ENCODE measurements at regions of chr9 and their contacts with region 1.

Region 1: DNA sequence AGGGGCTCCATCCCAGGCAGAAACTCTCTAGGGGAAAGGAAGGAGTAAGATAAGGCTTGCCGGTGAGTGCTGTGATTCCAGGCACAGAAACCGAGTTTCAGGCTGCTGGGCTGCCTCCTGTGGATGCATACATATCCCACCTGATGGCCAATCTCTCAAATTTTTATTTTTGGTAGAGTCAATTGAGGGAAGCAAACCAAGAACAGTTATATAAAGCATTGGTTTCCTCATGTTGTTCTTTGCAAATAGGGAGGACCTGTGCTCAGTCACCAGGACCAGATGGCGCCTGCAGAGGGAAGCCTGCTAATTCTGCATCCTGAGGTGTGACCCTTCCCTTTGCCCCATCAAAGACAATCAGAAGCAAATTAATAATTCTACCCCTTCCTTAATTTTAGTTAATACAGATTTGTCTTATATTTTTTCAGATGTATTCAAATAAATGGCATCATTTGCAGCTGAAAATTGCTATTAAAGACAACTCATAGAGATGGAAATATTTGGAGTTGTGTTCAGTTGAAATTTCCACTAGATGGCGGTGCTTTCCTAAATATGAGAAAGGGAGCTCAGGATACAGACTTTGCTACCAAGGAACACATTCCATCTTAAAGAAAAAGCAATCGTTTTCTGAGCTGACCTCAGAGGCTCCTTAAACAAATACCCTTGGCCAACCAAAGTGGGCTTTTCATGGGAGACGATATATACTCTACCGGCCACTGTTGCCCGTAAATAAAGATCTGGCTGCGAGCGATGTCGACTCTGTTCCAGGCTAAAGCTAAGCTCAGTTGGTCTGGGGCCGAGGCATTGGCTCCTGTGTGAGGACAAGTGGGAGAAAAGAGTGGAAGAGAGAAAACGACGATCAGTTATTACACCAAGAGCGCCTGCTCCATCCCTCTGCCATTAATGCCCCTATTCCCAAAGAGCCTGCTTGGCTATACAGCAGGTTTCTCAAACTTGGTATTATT is 225.7 kb upstream of the KLF9 start:
- DNase-seq: no peak
- ATAC-seq: peak; percentile 61
- H3K4me3 Mint-ChIP-seq: peak overlapping the region; percentile 56
- H3K27ac Mint-ChIP-seq: no peak overlapping the region
- H3K4me1 Mint-ChIP-seq: peaks cover 22% of the 10 kb centered on the region
- H3K27me3 Mint-ChIP-seq: no peaks in the 10 kb centered on the region
- CTCF ChIP-seq: peak; percentile 53; the same call in 1 of the 2 replicates

Region 2: DNA sequence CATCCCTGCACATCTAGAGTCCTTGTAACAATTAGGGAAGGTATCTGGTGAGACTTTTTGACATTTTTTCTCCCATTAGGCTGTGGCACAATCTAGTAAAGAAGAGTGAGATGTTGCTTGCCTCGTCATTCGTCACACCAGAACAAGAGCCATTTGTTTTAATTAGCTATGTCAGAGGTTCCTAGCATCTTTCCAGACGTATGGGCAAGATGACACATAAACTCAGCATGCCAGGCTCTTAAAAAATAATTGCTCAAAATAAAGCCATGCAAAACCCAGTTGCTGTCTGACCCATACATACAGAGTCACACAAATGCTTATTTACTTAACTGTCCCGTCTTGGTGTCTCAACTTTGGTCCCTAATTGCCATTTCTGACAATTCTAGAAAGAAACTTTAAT is 355.4 kb after region 1 on chr9:
- CTCF ChIA-PET with region 1: interaction called, 13 read pairs
- POLR2A ChIA-PET with region 1: no interaction called
- DNase-seq: no peak
- ATAC-seq: no peak
- H3K4me3 Mint-ChIP-seq: no peak overlapping the region
- H3K27ac Mint-ChIP-seq: no peak overlapping the region
- H3K4me1 Mint-ChIP-seq: peaks cover 16% of the 10 kb centered on the region
- H3K27me3 Mint-ChIP-seq: peaks cover 8% of the 10 kb centered on the region
- CTCF ChIP-seq: no peak

Region 3: DNA sequence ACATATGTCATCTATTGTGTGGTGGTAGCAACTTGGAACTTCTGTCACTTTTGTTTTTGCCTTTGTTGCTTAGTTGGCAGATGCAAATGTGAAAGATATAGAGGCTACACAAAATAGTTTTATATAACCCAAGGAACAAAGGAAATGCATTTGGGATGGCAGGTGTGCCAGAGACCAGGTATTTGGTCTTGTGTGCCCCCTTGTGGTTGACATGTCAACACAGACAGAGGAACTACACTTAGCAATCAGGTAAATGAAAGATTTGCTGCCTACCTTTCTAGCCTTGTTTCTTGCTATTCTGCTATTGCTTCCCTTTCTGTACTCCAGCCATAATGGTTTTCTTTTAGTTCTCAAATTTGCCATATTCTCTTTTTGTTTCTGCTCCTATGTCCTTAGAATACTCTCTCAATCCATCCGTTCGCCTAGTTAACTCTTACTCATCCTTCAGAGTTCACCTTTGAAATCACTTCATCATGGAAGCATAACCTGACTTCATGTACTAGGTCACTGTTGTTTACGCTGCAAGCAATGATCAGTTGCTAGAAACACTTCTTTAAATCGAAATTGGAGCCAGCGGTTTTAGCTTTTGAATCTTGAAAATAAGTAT is 361.7 kb after region 1 on chr9:
- CTCF ChIA-PET with region 1: interaction called, 13 read pairs
- POLR2A ChIA-PET with region 1: no interaction called
- DNase-seq: peak; percentile 59
- ATAC-seq: peak; percentile 89
- H3K4me3 Mint-ChIP-seq: no peak overlapping the region
- H3K27ac Mint-ChIP-seq: no peak overlapping the region
- H3K4me1 Mint-ChIP-seq: peaks cover 13% of the 10 kb centered on the region
- H3K27me3 Mint-ChIP-seq: no peaks in the 10 kb centered on the region; the same call in 1 of the 2 replicates
- CTCF ChIP-seq: peak; percentile 85

Region 4: GRCh38 chr9:71171517-71171916 is 531.4 kb after region 1 on chr9:
- CTCF ChIA-PET with region 1: no interaction called
- POLR2A ChIA-PET with region 1: no interaction called
- DNase-seq: no peak
- ATAC-seq: no peak; the same call in 1 of the 2 replicates
- H3K4me3 Mint-ChIP-seq: no peak overlapping the region
- H3K27ac Mint-ChIP-seq: peak overlapping the region; percentile 37
- H3K4me1 Mint-ChIP-seq: peaks cover 47% of the 10 kb centered on the region
- H3K27me3 Mint-ChIP-seq: no peaks in the 10 kb centered on the region
- CTCF ChIP-seq: no peak

Region 5: DNA sequence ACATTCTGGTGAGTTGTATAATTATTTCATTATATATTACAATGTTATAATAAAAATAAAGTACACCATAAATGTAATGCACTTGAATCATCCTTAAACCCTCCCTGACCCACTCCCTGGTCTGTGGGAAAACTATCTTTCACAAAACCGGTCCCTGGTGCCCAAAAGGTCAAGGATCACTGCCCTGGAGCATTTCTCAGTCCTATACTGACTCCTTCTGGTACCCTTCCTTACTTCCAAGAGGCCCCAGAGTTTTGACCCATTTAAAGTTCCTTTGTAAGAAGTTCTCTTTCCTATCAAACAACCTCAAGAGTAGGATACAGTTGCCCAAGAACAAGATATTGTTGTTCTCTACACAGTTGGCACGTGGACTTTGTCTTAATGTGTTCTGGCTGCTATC is 570.2 kb after region 1 on chr9:
- CTCF ChIA-PET with region 1: interaction called, 15 read pairs
- POLR2A ChIA-PET with region 1: no interaction called
- DNase-seq: no peak
- ATAC-seq: peak; percentile 80
- H3K4me3 Mint-ChIP-seq: no peak overlapping the region
- H3K27ac Mint-ChIP-seq: no peak overlapping the region
- H3K4me1 Mint-ChIP-seq: peaks cover 17% of the 10 kb centered on the region
- H3K27me3 Mint-ChIP-seq: no peaks in the 10 kb centered on the region; the same call in 1 of the 2 replicates
- CTCF ChIP-seq: no peak

Region 6: DNA sequence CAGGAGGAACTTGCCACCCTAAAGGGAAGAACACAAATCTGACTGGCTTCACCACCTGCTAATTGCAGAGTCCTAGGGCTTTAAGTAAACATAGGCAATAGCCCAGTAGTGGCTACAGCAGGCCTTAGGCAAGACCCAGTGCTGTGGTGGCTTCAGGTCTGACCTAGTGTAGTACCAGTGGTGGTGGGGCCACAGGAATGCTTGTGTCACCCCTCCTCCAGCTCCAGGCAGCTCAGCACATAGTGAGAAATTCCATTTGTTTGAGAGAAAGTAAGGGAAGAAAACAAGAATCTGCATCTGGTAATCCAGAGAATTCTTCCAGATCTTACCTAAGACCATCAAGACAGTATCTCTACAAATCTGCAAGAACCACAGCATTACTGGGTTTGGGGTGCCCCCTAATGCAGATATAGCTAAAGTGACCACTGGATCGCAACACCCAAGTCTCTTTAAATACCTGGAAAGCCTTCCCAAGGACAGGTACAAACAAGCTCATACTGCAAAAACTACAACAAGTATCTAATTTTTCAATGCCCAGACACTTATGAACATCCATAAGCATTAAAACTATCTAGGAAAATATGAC is 583.9 kb after region 1 on chr9:
- CTCF ChIA-PET with region 1: interaction called, 17 read pairs
- POLR2A ChIA-PET with region 1: no interaction called
- DNase-seq: peak; percentile 41
- ATAC-seq: peak; percentile 84
- H3K4me3 Mint-ChIP-seq: no peak overlapping the region
- H3K27ac Mint-ChIP-seq: no peak overlapping the region
- H3K4me1 Mint-ChIP-seq: peaks cover 6% of the 10 kb centered on the region
- H3K27me3 Mint-ChIP-seq: no peaks in the 10 kb centered on the region
- CTCF ChIP-seq: no peak

Region 7: GRCh38 chr9:71249729-71250317 is 609.7 kb after region 1 on chr9:
- CTCF ChIA-PET with region 1: interaction called, 11 read pairs
- POLR2A ChIA-PET with region 1: no interaction called
- DNase-seq: no peak
- ATAC-seq: 0 out of 2 replicates have a peak, but pooled peaks have one; percentile 8
- H3K4me3 Mint-ChIP-seq: peak overlapping the region; percentile 27; the same call in 1 of the 2 replicates
- H3K27ac Mint-ChIP-seq: peak overlapping the region; percentile 71; the same call in 1 of the 2 replicates
- H3K4me1 Mint-ChIP-seq: peaks cover 45% of the 10 kb centered on the region
- H3K27me3 Mint-ChIP-seq: no peaks in the 10 kb centered on the region
- CTCF ChIP-seq: no peak; the same call in 1 of the 2 replicates